ENCODE measurements at regions of chr9 and their contacts with region 1.

Region 1: GRCh38 chr9:120985810-120986222 is 59.2 kb upstream of the TRAF1 start:
- DNase-seq: peak in 1 of 2 donors; percentile 11
- ATAC-seq: peak in 5 of 8 donors; percentile 56 to 77 (median 75)
- H3K4me3 ChIP-seq: no peak overlapping the region
- H3K27ac ChIP-seq: no peak overlapping the region
- H3K4me1 ChIP-seq: peaks cover 0 to 6% (median 0%) of the 10 kb centered on the region in 9 donors
- H3K27me3 ChIP-seq: no peaks in the 10 kb centered on the region
- CTCF ChIP-seq: peak in 8 of 9 donors; percentile 33 to 62 (median 49)

Region 2: DNA sequence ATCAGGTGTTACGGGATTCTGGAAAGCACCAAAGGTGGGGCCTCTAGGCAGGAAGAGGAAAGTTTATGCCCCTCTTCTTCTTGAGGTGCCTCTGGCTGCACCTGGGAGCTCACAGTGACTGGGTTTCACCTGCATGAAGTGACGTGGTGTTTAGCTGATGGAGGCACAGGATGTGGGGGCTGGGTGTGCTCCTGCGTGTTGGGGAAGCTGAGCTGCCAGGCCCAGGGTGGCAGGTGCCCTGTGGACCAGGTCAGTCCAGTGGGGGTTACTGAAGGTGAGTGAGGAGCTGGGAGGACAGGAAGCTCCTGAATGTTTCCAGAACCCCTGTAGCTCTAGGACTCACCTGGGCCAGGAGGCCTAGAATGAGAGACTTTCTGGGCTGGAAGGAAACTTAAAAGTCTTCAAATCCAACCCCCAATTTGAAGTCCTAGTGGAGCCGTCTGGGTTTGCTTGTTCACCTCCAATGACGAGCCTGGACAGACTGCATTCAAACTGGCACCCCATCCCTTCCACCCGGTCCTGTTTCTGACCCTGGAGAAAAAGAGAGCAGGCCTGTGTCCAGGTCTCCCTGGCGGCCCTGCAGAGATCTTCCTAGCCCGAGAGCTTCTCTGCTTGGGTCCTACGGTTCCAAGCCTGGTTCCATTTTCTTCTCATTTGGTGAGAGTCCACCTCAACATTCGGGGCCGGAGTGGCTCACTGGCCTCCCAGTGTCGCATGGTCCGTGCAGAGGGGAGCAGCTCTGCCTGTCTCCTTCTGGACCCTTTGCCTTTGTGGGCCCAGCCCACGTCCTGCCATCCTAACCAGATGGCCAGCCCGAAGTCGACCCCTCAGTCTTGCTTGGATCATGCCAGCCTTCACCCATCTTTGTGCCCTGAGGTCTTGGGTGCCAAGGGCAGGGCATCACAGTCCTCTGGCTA is 81.5 kb before region 1 on chr9:
- intact Hi-C with region 1: no loop called
- DNase-seq: no peak
- ATAC-seq: no peak
- H3K4me3 ChIP-seq: no peak overlapping the region
- H3K27ac ChIP-seq: peak overlapping the region in 1 of 10 donors; percentile 65
- H3K4me1 ChIP-seq: no peaks in the 10 kb centered on the region
- H3K27me3 ChIP-seq: no peaks in the 10 kb centered on the region
- CTCF ChIP-seq: no peak

Region 3: GRCh38 chr9:121059998-121060636 is 74.3 kb after region 1 on chr9:
- intact Hi-C with region 1: loop called in 8 of 10 experiments (anchors 1 to 5 kb)
- DNase-seq: peak in 1 of 2 donors; percentile 41
- ATAC-seq: no peak
- H3K4me3 ChIP-seq: no peak overlapping the region
- H3K27ac ChIP-seq: no peak overlapping the region
- H3K4me1 ChIP-seq: peaks cover 0 to 7% (median 0%) of the 10 kb centered on the region in 9 donors
- H3K27me3 ChIP-seq: no peaks in the 10 kb centered on the region
- CTCF ChIP-seq: peak; percentile 49 to 82 (median 77)

Region 4: DNA sequence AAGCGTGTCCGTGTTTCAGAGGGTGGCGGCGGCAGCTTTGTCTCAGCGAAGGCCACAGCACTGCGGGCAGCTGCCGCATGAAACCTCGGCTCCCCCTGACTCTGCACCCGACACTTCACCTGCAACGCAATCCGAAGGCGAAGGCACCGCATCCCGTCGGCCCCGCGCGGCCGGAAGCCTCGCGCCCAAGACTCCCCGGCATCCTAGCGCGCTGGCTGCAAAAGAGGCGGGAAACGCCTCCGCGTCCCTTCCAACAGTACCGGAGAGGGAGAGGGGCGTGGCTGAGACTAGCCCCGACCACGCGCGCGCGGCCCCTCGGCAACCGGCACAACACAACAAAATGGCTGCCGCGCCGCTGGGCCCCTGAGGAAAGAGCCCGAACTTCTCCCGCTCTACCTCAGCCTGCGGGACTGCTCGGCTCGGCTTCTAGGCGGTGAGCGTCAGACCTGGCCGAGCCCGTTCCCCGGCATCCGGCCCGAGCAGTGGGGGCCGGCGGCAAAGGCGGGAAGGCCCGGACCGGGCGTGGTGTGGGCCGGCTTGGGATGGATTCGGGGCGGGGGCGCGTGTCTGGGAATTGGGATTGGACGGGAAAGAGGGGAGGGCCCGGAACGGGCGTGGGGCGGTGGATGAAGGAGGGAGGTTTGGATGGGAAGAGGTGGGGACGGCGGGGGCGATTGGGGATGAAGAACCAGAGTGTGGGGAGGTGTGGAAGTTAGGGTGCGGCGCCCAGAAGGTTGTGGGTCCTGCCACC is 89.0 kb after region 1 on chr9 and contains the start of gene CNTRL:
- intact Hi-C with region 1: loop called in 1 of 10 experiments (anchors 5 kb)
- DNase-seq: peak; percentile 87 to 92
- ATAC-seq: peak; percentile 93 to 96 (median 96)
- H3K4me3 ChIP-seq: peak within 1 kb of the TSS; percentile 40 to 93 (median 78)
- H3K27ac ChIP-seq: peak within 1 kb of the TSS; percentile 71 to 94 (median 88)
- H3K4me1 ChIP-seq: peaks cover 0 to 45% (median 19%) of the 10 kb centered on the region in 9 donors
- H3K27me3 ChIP-seq: no peaks in the 10 kb centered on the region
- CTCF ChIP-seq: peak in 1 of 9 donors; percentile 2
- total RNA-seq, gene CNTRL: 3.6 to 7.5 (median 4.2) TPM

Region 5: DNA sequence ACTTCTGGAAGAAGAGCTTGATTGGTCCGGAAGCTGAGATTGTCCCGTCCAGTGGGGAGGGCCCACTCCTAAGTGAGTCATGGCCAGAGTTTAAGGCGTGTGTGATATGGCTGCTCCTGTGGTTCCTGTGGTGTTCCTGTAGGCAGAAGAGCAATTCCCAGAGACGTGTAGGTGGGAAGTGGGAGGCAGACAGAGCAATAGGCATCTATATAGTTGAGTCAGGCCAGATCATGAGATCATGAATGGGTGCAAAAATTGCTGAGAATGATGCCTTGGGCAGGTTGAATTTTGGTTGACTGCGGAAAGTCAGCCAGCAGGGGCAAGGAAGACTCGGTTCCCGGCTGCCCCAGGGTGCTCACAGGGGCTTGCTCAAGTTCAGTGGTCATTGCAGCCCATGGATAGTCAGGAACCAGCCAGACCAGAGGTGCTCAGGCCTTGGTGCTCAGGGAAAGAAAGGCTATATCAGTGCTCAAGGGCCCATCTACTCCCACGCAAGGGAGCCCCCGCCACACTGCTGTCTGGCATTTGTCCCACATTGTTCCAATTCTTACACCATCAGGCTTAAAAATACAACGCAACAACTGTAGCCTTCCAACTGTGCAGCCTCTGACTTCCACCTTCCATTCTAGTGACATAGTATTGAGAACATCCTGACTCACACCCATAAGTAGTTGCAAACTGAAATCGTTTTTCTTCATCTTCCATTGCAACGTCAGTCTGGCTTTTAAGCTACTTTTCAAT is 261.2 kb after region 1 on chr9:
- intact Hi-C with region 1: no loop called
- DNase-seq: peak in 1 of 2 donors; percentile 28
- ATAC-seq: peak; percentile 33 to 80 (median 59)
- H3K4me3 ChIP-seq: no peak overlapping the region
- H3K27ac ChIP-seq: peak overlapping the region in 3 of 10 donors; percentile 8 to 34 (median 19)
- H3K4me1 ChIP-seq: peaks cover 0 to 29% (median 0%) of the 10 kb centered on the region in 9 donors
- H3K27me3 ChIP-seq: no peaks in the 10 kb centered on the region
- CTCF ChIP-seq: no peak

Region 6: DNA sequence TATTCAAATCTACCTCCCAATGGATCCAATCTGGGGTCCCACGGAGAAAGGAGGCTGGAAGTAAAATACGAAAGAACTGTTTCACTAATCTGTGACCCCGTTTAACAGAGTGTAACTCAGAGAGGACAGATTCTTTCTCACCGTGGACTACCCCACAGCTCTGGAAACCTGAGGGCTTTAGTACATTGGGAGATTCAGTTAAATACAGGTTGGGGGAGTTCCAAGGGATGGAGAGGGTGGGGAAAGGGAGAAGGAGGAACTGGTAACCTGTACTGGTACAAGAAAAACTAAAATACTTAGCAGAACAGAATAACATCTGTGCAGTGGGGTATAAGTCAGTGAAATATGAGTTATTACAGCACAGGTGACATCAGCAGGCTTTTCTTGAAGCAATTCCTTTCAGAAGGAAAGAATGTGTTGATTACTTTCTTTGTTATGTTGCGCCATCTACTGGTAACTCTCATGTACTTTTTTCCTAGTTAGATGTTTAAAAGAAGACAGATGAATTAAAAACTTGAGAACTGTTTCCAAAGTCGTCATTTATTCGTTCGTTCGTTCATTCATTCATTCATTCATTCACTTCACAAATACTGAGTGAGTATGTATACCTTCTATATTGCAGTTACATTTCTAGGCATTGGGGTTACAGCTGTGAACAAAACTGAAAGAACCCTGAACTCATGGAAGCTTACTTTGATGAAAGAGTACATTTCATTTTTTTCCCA is 414.2 kb after region 1 on chr9:
- intact Hi-C with region 1: loop called in 3 of 10 experiments (anchors 5 to 10 kb)
- DNase-seq: peak in 1 of 2 donors; percentile 19
- ATAC-seq: peak in 5 of 8 donors; percentile 46 to 68 (median 64)
- H3K4me3 ChIP-seq: no peak overlapping the region
- H3K27ac ChIP-seq: no peak overlapping the region
- H3K4me1 ChIP-seq: peaks cover 0 to 6% (median 0%) of the 10 kb centered on the region in 9 donors
- H3K27me3 ChIP-seq: no peaks in the 10 kb centered on the region
- CTCF ChIP-seq: peak; percentile 60 to 80 (median 72)

Measured in heart right ventricle (tissue), 16 donors.